CD8-positive, alpha-beta T cell (primary cell): ENCODE measurements at regions of chr1 and their contacts with region 1.

Region 1: GRCh38 chr1:185694081-185694480 is 40.1 kb upstream of the HMCN1 start:
- DNase-seq: peak in 5 of 9 experiments; percentile 9 to 68 (median 40)
- ATAC-seq: peak; percentile 48
- H3K4me3 ChIP-seq: peak overlapping the region; percentile 31 to 36
- H3K4me3 Mint-ChIP-seq: peak overlapping the region; percentile 76
- H3K27ac ChIP-seq: peak overlapping the region; percentile 38 to 77
- H3K27ac Mint-ChIP-seq: peak overlapping the region; percentile 91
- H3K4me1 ChIP-seq: peaks cover 18% of the 10 kb centered on the region
- H3K4me1 Mint-ChIP-seq: peaks cover 23% of the 10 kb centered on the region
- H3K27me3 ChIP-seq: no peaks in the 10 kb centered on the region
- H3K27me3 Mint-ChIP-seq: peaks cover 3% of the 10 kb centered on the region
- CTCF ChIP-seq: no peak

Region 2: DNA sequence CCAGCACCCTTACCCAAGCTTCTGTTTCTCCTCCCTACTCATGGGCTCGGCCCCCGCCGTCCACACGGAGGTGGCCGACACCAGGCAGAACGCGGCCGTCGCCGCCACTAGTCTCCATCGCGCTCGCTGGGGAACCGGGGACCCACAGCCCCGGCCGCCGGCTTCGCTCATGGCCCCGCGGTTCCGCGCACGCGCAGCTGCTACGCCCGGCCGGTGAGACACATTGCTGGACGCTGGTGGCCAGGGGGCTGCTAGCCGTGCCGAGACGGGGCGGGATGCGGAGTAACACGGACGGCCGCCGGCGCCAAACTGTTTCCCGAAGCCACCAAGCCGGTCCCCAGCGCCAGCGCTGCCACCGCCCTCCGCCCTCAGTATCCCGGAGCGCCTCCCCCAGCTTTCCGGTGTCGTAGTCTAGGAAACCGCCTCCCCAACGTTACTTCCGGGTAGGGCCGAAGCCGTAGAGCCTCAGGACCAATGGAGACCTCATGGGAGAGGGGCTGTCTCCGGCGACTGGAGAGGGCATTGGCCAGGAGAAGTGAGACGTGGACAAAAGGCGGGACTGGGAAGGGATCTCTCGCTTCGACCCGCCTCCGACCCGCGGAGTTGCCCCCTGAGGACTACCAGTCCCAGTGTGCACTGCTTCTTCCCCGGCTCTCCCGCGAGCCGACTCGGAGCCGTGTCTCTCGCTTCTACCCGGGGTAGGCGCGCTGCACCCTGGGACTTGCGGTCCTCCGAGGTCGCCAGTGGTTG is 939.4 kb before region 1 on chr1 and contains the start of gene EDEM3:
- CTCF ChIA-PET with region 1: no interaction called
- POLR2A ChIA-PET with region 1: no interaction called
- intact Hi-C with region 1: loop called in 1 of 2 experiments (anchors 2 kb)
- DNase-seq: peak; percentile 94 to 100 (median 97)
- ATAC-seq: peak; percentile 92
- H3K4me3 ChIP-seq: peak within 1 kb of the TSS; percentile 80 to 91
- H3K4me3 Mint-ChIP-seq: peak within 1 kb of the TSS; percentile 93
- H3K27ac ChIP-seq: peak within 1 kb of the TSS; percentile 80 to 84
- H3K27ac Mint-ChIP-seq: peak within 1 kb of the TSS; percentile 97
- H3K4me1 ChIP-seq: peaks cover 22% of the 10 kb centered on the region
- H3K4me1 Mint-ChIP-seq: peaks cover 50% of the 10 kb centered on the region
- H3K27me3 ChIP-seq: no peaks in the 10 kb centered on the region
- H3K27me3 Mint-ChIP-seq: no peaks in the 10 kb centered on the region
- CTCF ChIP-seq: no peak
- total RNA-seq, gene EDEM3: 9.3 to 14.8 TPM

Region 3: DNA sequence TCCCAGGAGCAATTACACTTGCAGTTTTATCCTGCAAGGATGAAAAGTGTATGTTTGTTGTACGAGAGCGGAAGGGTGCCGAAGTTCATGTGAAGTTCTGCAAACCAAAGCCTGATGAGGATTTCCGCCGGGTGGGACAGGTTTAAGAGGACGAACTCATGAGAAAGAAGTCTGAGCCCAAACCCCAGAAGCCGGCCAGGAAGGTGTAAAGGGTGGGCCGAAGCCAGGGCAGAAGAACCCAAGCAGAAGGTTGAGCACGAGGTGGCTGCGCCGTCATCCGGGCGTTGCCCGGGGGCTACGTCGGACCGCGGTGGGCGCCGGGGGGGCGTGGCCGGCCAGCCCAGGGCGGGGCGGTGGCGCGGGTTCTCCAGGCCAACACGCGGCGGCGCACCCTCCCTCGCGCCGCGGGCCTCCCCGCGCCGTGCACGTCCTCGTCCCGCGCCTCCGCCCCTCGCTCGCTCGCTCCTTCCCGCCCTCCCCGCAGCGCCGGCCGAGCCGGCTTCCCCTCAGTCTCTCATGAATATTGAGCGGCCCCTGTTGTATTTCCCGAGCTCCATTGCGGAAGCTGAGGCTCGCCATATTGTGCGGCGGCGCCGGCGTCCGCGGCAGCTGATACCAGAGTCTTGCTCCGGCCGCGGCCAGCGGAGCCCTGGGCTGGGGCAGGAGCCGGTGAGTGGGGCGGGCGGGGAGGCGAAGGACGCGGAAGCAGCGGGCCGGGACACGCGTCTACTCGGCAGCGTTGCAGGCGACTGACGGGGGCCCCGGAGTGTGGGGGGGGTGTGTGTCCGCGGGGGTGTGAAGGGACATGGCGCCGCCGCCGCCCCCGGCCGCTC is 648.9 kb before region 1 on chr1 and contains the start of gene RNF2:
- CTCF ChIA-PET with region 1: no interaction called
- POLR2A ChIA-PET with region 1: no interaction called
- intact Hi-C with region 1: loop called in 1 of 2 experiments (anchors 5 kb)
- DNase-seq: peak; percentile 61 to 95 (median 84)
- ATAC-seq: peak; percentile 91
- H3K4me3 ChIP-seq: peak within 1 kb of the TSS; percentile 74 to 85
- H3K4me3 Mint-ChIP-seq: peak within 1 kb of the TSS; percentile 92
- H3K27ac ChIP-seq: peak within 1 kb of the TSS; percentile 62 to 81
- H3K27ac Mint-ChIP-seq: peak within 1 kb of the TSS; percentile 93
- H3K4me1 ChIP-seq: peaks cover 23% of the 10 kb centered on the region
- H3K4me1 Mint-ChIP-seq: peaks cover 46% of the 10 kb centered on the region
- H3K27me3 ChIP-seq: no peaks in the 10 kb centered on the region
- H3K27me3 Mint-ChIP-seq: no peaks in the 10 kb centered on the region
- CTCF ChIP-seq: no peak
- total RNA-seq, gene RNF2: 13.3 to 13.6 TPM

Region 4: GRCh38 chr1:185170291-185170848 is 523.7 kb before region 1 on chr1:
- CTCF ChIA-PET with region 1: interaction called, 8 read pairs
- POLR2A ChIA-PET with region 1: no interaction called
- intact Hi-C with region 1: loop called in 1 of 2 experiments (anchors 1 kb)
- DNase-seq: peak in 7 of 9 experiments; percentile 23 to 76 (median 53)
- ATAC-seq: peak; percentile 93
- H3K4me3 ChIP-seq: no peak overlapping the region
- H3K4me3 Mint-ChIP-seq: peak overlapping the region; percentile 42
- H3K27ac ChIP-seq: no peak overlapping the region
- H3K27ac Mint-ChIP-seq: peak overlapping the region; percentile 10
- H3K4me1 ChIP-seq: no peaks in the 10 kb centered on the region
- H3K4me1 Mint-ChIP-seq: peaks cover 3% of the 10 kb centered on the region
- H3K27me3 ChIP-seq: no peaks in the 10 kb centered on the region
- H3K27me3 Mint-ChIP-seq: no peaks in the 10 kb centered on the region
- CTCF ChIP-seq: peak; percentile 80

Region 5: DNA sequence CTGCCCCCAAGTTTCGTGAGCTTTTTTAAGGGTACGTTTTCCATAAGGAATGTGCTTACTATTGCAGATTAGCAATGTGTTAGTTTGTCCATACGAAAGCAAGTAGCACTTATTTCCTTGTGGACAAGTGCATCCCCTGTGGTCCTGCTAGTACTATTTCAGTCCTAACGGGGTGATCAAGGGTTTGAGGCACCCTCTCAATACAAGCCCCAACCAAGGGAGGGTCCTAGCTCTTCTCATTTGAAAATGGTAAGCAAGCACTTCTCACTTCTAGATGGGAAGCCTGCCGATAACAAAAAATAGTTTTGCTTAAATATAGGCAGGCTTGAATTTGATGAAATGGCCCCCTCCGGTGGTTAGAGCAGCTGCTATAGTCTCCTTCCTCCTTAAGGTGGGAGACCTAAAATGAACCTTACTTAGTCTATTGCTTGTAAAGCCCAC is 23.9 kb before region 1 on chr1:
- CTCF ChIA-PET with region 1: interaction called, 18 read pairs
- POLR2A ChIA-PET with region 1: no interaction called
- intact Hi-C with region 1: loop called in 1 of 2 experiments (anchors 2 kb)
- DNase-seq: peak; percentile 12 to 78 (median 63)
- ATAC-seq: peak; percentile 81
- H3K4me3 ChIP-seq: no peak overlapping the region
- H3K4me3 Mint-ChIP-seq: no peak overlapping the region
- H3K27ac ChIP-seq: no peak overlapping the region
- H3K27ac Mint-ChIP-seq: peak overlapping the region; percentile 78
- H3K4me1 ChIP-seq: peaks cover 14% of the 10 kb centered on the region
- H3K4me1 Mint-ChIP-seq: peaks cover 39% of the 10 kb centered on the region
- H3K27me3 ChIP-seq: no peaks in the 10 kb centered on the region
- H3K27me3 Mint-ChIP-seq: no peaks in the 10 kb centered on the region
- CTCF ChIP-seq: peak; percentile 69

Region 6: GRCh38 chr1:185681034-185681633 is 12.9 kb before region 1 on chr1:
- CTCF ChIA-PET with region 1: interaction called, 20 read pairs
- POLR2A ChIA-PET with region 1: interaction called, 5 read pairs
- intact Hi-C with region 1: no loop called
- DNase-seq: peak in 4 of 9 experiments; percentile 15 to 67 (median 40)
- ATAC-seq: peak; percentile 51
- H3K4me3 ChIP-seq: no peak overlapping the region
- H3K4me3 Mint-ChIP-seq: no peak overlapping the region
- H3K27ac ChIP-seq: no peak overlapping the region
- H3K27ac Mint-ChIP-seq: no peak overlapping the region
- H3K4me1 ChIP-seq: peaks cover 10% of the 10 kb centered on the region
- H3K4me1 Mint-ChIP-seq: peaks cover 26% of the 10 kb centered on the region
- H3K27me3 ChIP-seq: no peaks in the 10 kb centered on the region
- H3K27me3 Mint-ChIP-seq: no peaks in the 10 kb centered on the region
- CTCF ChIP-seq: peak; percentile 30